ENCODE measurements at regions of chr9 and their contacts with region 1.

Region 1: GRCh38 chr9:96667361-96667728 is 12.2 kb upstream of the PRXL2C start:
- DNase-seq: no peak
- H3K4me3 ChIP-seq: no peak overlapping the region
- H3K27ac ChIP-seq: no peak overlapping the region
- H3K4me1 ChIP-seq: no peaks in the 10 kb centered on the region
- H3K27me3 ChIP-seq: no peaks in the 10 kb centered on the region
- CTCF ChIP-seq: no peak
- POLR2A ChIP-seq: no peak

Region 2: GRCh38 chr9:96331236-96331947 is 336.0 kb before region 1 on chr9:
- intact Hi-C with region 1: loop called in 1 of 2 experiments (anchors 5 kb)
- DNase-seq: no peak
- H3K4me3 ChIP-seq: no peak overlapping the region
- H3K27ac ChIP-seq: no peak overlapping the region
- H3K4me1 ChIP-seq: peaks cover 0 to 6% of the 10 kb centered on the region in 2 donors
- H3K27me3 ChIP-seq: no peaks in the 10 kb centered on the region
- CTCF ChIP-seq: no peak
- POLR2A ChIP-seq: no peak

Region 3: GRCh38 chr9:98207606-98208005 is 1540.3 kb after region 1 on chr9:
- intact Hi-C with region 1: no loop called
- DNase-seq: no peak
- H3K4me3 ChIP-seq: no peak overlapping the region
- H3K27ac ChIP-seq: no peak overlapping the region
- H3K4me1 ChIP-seq: no peaks in the 10 kb centered on the region
- H3K27me3 ChIP-seq: no peaks in the 10 kb centered on the region
- CTCF ChIP-seq: no peak
- POLR2A ChIP-seq: no peak

Measured in adrenal gland (tissue), 19 donors.